ENCODE measurements at regions of chr3 and their contacts with region 1.

Region 1: GRCh38 chr3:44198284-44199269 is 43.1 kb upstream of the TOPAZ1 start:
- DNase-seq: peak; percentile 80
- H3K4me3 Mint-ChIP-seq: no peak overlapping the region
- H3K27ac Mint-ChIP-seq: no peak overlapping the region
- H3K4me1 Mint-ChIP-seq: no peaks in the 10 kb centered on the region
- H3K27me3 Mint-ChIP-seq: peaks cover 22% of the 10 kb centered on the region
- CTCF ChIP-seq: peak; percentile 68

Region 2: DNA sequence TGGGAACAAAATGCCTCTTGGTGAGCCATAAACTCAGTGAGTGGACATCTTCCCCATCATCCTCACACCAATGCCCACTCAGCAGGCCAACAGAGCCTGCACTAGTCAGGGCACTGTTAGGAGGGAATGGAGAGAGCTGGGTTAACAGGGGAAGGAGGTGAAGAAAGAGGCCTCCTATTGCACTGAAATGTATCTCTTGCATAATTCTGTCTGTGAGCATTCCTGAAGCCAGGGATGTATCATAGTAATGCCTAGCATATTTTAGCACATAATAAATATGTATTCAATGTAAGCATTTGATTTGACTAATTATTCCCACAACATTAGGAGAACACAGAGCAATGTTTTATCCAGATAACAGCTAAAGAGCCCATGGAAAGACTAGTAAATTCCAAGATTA is 658.0 kb before region 1 on chr3:
- CTCF ChIA-PET with region 1: no interaction called
- intact Hi-C with region 1: loop called (anchors 1 kb)
- DNase-seq: no peak
- H3K4me3 Mint-ChIP-seq: no peak overlapping the region
- H3K27ac Mint-ChIP-seq: no peak overlapping the region
- H3K4me1 Mint-ChIP-seq: no peaks in the 10 kb centered on the region
- H3K27me3 Mint-ChIP-seq: no peaks in the 10 kb centered on the region
- CTCF ChIP-seq: no peak

Region 3: DNA sequence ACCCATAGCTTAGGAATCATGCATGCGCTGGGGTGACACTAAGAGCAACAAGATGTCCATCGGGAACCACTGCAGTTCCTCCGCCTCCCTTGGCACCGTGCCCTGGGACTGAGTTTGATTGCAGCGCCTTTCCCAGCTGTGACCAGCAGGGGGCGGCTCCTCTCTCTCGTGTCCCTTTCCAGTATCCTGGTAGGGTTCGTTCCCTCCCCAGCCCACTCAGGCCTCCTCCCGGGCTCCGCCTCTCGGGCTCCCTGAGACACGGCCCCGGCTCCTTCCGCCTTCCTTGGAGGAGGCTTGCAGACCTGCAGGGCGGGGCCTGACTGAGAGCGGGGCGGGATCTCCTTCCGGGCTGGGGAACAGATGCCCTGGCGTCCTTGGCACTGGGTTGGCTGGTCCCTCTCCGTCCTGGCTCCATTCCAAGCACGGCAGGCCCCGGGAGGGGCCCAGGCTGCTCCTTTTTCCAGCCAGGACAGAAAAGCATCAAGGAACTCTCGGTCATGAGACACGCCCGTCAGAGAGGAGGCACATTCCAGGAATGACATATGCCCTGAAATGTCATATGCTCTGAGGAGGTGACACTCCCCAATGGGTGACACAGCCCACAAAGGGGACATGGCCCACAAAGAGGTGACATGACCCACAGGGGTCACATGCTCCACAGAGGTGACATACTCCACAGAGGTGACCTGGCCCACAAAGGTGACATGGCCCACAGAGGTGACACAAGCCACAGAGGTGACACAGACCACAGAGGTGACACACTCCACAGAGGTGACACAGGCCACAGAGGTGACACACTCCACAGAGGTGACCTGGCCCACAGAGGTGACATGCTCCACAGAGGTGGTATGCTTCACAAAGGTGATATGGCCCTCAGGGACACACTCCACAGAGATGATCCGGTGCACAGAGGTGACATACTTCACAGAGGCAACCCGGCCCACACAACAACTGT is 428.8 kb before region 1 on chr3:
- CTCF ChIA-PET with region 1: interaction called, 4 read pairs
- intact Hi-C with region 1: loop called (anchors 1 kb)
- DNase-seq: peak; percentile 98
- H3K4me3 Mint-ChIP-seq: peak overlapping the region; percentile 69
- H3K27ac Mint-ChIP-seq: peak overlapping the region; percentile 65
- H3K4me1 Mint-ChIP-seq: peaks cover 48% of the 10 kb centered on the region
- H3K27me3 Mint-ChIP-seq: no peaks in the 10 kb centered on the region
- CTCF ChIP-seq: peak; percentile 87

Region 4: GRCh38 chr3:43855674-43856299 is 342.8 kb before region 1 on chr3:
- CTCF ChIA-PET with region 1: interaction called, 11 read pairs
- intact Hi-C with region 1: loop called (anchors 5 kb)
- DNase-seq: peak; percentile 82
- H3K4me3 Mint-ChIP-seq: no peak overlapping the region
- H3K27ac Mint-ChIP-seq: no peak overlapping the region
- H3K4me1 Mint-ChIP-seq: peaks cover 22% of the 10 kb centered on the region
- H3K27me3 Mint-ChIP-seq: peaks cover 58% of the 10 kb centered on the region
- CTCF ChIP-seq: peak; percentile 53

Region 5: DNA sequence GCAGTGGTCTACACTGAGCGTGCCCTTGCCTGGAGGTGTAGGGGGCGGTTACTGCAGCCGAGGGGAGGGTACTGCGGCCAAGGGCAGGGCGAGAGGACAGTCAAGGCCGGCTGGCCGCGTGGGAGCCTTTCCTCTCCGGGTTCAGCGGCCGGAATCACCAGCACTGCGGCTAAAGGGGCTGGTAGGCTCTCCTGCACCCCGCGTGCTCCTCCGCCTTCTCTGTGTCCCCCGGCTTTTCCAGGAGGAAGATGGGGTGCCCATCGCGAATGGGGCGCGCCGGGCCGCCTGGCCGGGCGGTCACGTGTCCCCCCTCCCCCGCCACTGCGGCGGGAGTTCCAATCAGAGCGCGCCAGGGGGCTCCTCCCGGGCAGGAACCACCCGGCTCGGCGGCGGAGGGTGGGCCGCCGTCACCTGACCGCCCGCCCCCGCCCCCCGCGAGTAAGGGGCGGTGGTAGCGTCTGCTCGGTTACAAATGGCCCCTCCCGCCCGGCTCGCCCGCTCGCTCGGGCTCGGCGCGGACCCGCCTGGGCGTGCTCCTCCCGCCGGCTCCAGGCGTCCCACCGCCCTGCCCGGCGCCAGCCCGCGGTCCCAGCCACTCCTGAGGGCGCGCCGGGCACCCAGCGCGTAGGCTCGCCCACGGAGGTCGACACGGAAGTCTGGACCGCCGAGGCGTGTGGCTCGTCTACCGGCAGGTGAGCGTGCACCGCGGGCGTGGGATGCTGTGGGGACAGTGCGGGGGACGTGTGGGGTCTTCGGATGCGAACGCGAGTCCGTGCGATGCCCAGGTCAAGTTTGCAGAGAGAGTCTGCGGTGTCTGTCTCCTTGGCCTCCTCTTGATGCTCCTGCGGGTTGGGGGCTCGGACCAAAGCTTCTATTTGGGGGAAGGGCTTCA is 199.5 kb before region 1 on chr3:
- CTCF ChIA-PET with region 1: no interaction called
- intact Hi-C with region 1: loop called (anchors 2 kb)
- DNase-seq: peak; percentile 78
- H3K4me3 Mint-ChIP-seq: peak overlapping the region; percentile 73
- H3K27ac Mint-ChIP-seq: no peak overlapping the region
- H3K4me1 Mint-ChIP-seq: peaks cover 19% of the 10 kb centered on the region
- H3K27me3 Mint-ChIP-seq: peaks cover 43% of the 10 kb centered on the region
- CTCF ChIP-seq: no peak

Region 6: GRCh38 chr3:44318891-44319311 is 120.3 kb after region 1 on chr3:
- CTCF ChIA-PET with region 1: no interaction called
- intact Hi-C with region 1: no loop called
- DNase-seq: no peak
- H3K4me3 Mint-ChIP-seq: no peak overlapping the region
- H3K27ac Mint-ChIP-seq: no peak overlapping the region
- H3K4me1 Mint-ChIP-seq: no peaks in the 10 kb centered on the region
- H3K27me3 Mint-ChIP-seq: no peaks in the 10 kb centered on the region
- CTCF ChIP-seq: no peak